Left ventricle myocardium inferior (tissue), 1 donor: ENCODE measurements at regions of chr20 and their contacts with region 1.

Region 1: DNA sequence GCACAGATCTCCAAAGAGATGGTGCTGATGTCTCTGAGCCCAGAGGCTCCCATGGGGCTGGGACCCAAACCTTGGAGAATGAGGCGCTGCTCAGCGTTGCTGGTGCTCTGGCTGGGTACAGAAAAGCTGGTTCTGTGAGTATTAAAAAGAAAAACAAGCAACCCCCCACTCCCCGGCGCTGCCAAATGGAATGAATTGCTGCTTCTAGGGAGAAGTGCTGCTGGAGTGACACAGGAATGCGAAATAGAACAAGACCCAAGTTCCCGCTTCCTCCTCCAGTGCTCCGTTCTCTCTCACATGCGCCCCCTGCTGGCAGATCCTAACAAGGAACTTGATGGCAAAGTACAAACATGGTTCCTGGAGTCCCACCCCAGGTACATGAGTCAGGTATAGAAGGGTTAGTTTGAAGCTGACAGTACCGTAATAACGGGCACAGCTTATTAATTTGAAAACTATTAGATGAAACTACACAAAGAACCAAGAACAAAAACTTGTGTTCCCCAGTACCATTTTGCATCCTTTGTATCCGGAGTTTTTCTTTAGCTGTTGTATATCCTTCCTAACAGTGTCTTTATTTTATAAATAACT is 2.1 kb upstream of the DDX27 start:
- DNase-seq: peak; percentile 91
- H3K4me3 ChIP-seq: peak overlapping the region; percentile 32
- H3K27ac ChIP-seq: no peak overlapping the region
- H3K4me1 ChIP-seq: peaks cover 20% of the 10 kb centered on the region
- H3K27me3 ChIP-seq: no peaks in the 10 kb centered on the region
- CTCF ChIP-seq: peak; percentile 91

Region 2: GRCh38 chr20:48828022-48828743 is 388.9 kb before region 1 on chr20:
- intact Hi-C with region 1: no loop called
- DNase-seq: peak; percentile 86
- H3K4me3 ChIP-seq: peak overlapping the region; percentile 79
- H3K27ac ChIP-seq: peak overlapping the region; percentile 87
- H3K4me1 ChIP-seq: peaks cover 63% of the 10 kb centered on the region
- H3K27me3 ChIP-seq: peaks cover 7% of the 10 kb centered on the region
- CTCF ChIP-seq: peak; percentile 35

Region 3: DNA sequence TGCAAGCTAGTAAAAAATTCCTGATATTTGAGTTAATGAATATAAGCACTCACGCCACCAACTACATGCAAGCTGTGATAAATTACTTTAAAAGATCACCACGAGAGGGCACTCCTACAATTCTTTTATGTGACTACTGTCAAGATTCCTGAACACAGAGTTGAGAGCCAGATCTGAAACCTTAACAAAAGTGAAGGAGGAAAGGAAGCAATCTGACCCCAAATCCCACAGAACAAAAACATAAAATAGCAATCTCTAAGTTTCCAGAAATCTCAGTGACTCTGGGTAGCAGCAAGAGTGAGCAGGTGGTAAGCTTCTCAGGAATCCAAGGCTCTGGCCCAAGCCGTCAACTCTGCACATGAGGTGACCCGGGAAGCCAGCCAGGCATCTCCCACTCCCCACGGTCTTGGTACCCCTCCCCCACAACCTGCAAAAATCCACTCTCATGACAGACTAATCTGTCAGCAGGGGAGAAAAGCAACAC is 84.0 kb before region 1 on chr20:
- intact Hi-C with region 1: loop called (anchors 2 kb)
- DNase-seq: no peak
- H3K4me3 ChIP-seq: no peak overlapping the region
- H3K27ac ChIP-seq: no peak overlapping the region
- H3K4me1 ChIP-seq: peaks cover 6% of the 10 kb centered on the region
- H3K27me3 ChIP-seq: no peaks in the 10 kb centered on the region
- CTCF ChIP-seq: peak; percentile 69

Region 4: DNA sequence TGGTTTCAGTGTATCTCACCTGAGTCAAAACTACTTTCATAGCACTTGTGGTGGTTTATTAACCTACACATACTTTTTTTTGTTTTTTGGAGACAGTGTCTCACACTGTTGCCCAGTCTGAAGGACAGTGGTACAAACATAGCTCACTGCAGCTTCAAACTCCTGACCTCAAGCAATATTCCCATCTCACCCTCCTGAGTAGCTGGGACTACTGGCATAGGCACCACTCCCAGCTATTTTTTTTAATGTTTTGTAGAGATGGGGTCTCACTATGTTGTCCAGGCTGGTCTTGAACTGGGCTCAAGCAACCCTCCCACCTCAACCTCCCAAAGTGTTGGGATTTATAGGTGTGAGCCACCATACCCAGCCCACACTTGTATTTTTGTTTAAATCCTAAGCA is 78.7 kb before region 1 on chr20:
- intact Hi-C with region 1: loop called (anchors 2 kb)
- DNase-seq: no peak
- H3K4me3 ChIP-seq: no peak overlapping the region
- H3K27ac ChIP-seq: no peak overlapping the region
- H3K4me1 ChIP-seq: peaks cover under 1% of the 10 kb centered on the region
- H3K27me3 ChIP-seq: no peaks in the 10 kb centered on the region
- CTCF ChIP-seq: no peak

Region 5: GRCh38 chr20:49508435-49509199 is 291.5 kb after region 1 on chr20:
- intact Hi-C with region 1: no loop called
- DNase-seq: no peak
- H3K4me3 ChIP-seq: no peak overlapping the region
- H3K27ac ChIP-seq: no peak overlapping the region
- H3K4me1 ChIP-seq: no peaks in the 10 kb centered on the region
- H3K27me3 ChIP-seq: peaks cover 74% of the 10 kb centered on the region
- CTCF ChIP-seq: peak; percentile 63